Heart right ventricle (tissue), 16 donors: ENCODE measurements at regions of chr10 and their contacts with region 1.

Region 1: DNA sequence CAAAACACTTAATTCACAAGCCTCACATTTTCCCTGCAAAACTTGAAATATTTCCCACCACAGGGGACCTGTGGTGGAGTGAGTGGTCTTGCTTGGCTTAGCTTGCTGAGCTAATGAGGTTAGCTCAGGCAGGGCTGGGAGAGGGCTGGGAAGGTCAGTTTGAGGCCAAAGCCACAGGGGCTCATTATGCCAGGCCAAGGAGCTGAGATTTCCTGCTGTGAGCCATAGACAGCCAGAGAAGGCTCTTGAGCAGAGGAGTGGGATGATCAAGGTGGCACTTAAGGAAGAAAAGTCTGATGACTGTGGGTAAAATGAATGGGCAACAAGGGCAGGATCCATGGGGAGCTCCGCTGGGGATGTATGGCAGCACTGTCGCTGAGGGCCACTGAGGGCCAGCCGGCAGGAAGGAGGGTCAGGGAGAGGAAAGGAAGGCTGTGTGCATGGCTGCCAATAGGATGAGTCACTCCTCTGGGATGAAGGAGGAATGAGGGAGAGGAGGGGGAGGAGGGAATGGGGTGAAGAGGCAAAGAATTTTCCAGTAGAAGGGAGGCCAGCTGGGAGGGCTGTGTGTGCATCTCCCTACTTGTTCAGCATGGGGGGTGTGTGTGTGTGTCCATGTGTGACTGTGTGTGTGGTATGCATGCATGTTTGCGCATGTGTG is 18.7 kb upstream of the ZNF488 start:
- DNase-seq: peak; percentile 55 to 74
- ATAC-seq: peak; percentile 83 to 97 (median 90)
- H3K4me3 ChIP-seq: no peak overlapping the region
- H3K27ac ChIP-seq: peak overlapping the region in 2 of 10 donors; percentile 37 to 64
- H3K4me1 ChIP-seq: peaks cover 8 to 29% (median 15%) of the 10 kb centered on the region in 9 donors
- H3K27me3 ChIP-seq: no peaks in the 10 kb centered on the region
- CTCF ChIP-seq: no peak

Region 2: DNA sequence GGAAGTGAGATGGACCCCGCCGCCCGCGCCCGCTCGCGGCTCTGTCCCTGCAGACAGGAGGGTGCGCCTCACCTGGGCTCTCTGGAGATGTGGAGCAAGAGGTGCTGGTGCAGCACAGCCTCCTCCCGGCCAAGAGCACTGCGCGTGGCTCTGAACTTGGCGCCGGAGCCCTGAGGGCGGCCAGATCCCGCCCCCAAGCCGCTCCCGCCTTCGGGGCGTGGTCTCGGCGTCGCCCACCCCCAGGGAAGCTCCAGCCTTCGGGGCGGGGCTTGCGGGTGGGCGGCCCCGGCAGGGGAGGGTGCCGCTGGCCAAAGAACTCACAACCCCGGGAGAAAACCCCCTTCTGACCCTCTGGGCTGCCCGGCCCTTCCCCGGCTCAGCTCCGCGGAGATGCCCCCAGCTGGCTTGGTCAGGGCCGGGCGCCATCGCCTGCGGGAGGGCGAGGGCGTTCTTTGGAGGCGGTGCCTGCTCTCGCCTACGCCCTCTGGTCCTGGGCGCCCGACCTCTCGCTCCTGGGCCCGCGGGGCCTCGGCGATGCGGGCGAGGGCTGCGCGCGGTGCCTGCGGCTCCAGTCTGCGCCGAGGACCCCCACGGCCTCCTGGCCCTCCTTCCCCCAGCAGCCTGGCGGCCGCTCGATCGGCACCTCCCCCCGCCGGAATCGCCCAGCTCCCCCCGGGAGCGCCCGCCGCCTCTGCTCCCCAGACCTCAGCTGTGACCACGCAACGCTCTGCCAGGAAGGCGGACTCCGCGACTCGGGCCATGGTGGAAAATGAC is 18.4 kb before region 1 on chr10 and contains the start of gene ZNF488:
- intact Hi-C with region 1: loop called in 1 of 10 experiments (anchors 2 kb)
- DNase-seq: peak; percentile 78 to 86
- ATAC-seq: peak; percentile 98 to 99 (median 99)
- H3K4me3 ChIP-seq: peak within 1 kb of the TSS; percentile 57 to 96 (median 78)
- H3K27ac ChIP-seq: peak within 1 kb of the TSS in 9 of 10 donors; percentile 45 to 88 (median 75)
- H3K4me1 ChIP-seq: peaks cover 0 to 12% (median 7%) of the 10 kb centered on the region in 9 donors
- H3K27me3 ChIP-seq: peaks cover 0 to 23% (median 3%) of the 10 kb centered on the region in 7 donors
- CTCF ChIP-seq: peak in 2 of 9 donors; percentile 4 to 13
- total RNA-seq, gene ZNF488: 0.05 to 0.14 (median 0.11) TPM in 4 of 10 donors, not detected in the others